Panc1 (cell line): ENCODE measurements at regions of chr4 and their contacts with region 1.

Region 1: GRCh38 chr4:176340871-176341685 is 21.3 kb downstream of the SPCS3 start:
- DNase-seq: no peak
- ATAC-seq: no peak
- H3K4me3 ChIP-seq: no peak overlapping the region
- H3K27ac ChIP-seq: no peak overlapping the region
- H3K4me1 ChIP-seq: no peaks in the 10 kb centered on the region
- H3K27me3 ChIP-seq: no peaks in the 10 kb centered on the region
- CTCF ChIP-seq: peak; percentile 61

Region 2: DNA sequence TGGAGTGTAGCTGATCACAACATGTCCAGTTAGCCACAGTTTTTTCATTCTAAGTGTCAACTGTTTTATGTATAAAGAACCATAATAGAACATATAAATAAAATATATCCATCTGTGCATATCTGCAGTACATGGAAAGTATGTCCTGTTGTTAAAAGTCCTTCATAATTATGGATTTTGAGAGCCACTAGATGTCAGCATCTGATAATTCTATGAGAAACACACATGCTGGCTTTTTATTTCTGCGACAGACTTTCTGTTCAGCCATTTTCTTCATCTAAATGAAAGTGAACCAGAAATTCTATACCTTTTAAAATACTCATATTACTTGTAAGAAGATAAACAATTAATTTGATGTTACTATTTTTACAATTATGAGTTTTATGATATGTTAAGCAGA is 780.5 kb before region 1 on chr4:
- CTCF ChIA-PET with region 1: no interaction called
- POLR2A ChIA-PET with region 1: no interaction called
- in situ Hi-C with region 1: no loop called
- intact Hi-C with region 1: loop called (anchors 10 kb)
- DNase-seq: peak; percentile 5
- ATAC-seq: no peak
- H3K4me3 ChIP-seq: no peak overlapping the region
- H3K27ac ChIP-seq: no peak overlapping the region
- H3K4me1 ChIP-seq: no peaks in the 10 kb centered on the region
- H3K27me3 ChIP-seq: no peaks in the 10 kb centered on the region
- CTCF ChIP-seq: peak; percentile 28; the same call in 1 of the 2 replicates

Region 3: GRCh38 chr4:175947117-175947722 is 393.9 kb before region 1 on chr4:
- CTCF ChIA-PET with region 1: no interaction called
- POLR2A ChIA-PET with region 1: no interaction called
- in situ Hi-C with region 1: no loop called
- intact Hi-C with region 1: loop called (anchors 2 kb)
- DNase-seq: no peak
- ATAC-seq: no peak
- H3K4me3 ChIP-seq: no peak overlapping the region
- H3K27ac ChIP-seq: no peak overlapping the region
- H3K4me1 ChIP-seq: no peaks in the 10 kb centered on the region
- H3K27me3 ChIP-seq: no peaks in the 10 kb centered on the region
- CTCF ChIP-seq: peak; percentile 39; the same call in 1 of the 2 replicates

Region 4: DNA sequence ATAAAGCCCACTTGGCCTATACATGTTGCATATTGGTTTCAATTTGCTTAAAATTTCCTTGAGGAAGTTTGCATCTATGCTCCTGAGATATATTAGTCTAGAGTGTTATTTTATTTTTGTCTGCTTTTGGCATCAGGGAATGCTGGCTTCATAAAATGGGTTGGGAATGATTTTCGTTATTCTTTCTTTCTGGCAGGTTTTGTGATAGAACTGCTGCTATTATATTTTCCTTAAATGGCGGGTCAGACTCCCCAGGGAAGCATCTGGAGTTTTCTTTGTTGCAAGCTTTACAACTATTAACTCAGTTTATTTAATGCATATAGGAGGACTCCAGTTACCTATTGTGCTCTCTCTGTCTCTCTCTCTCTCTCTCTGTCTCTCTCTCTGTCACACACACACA is 357.4 kb before region 1 on chr4:
- CTCF ChIA-PET with region 1: no interaction called
- POLR2A ChIA-PET with region 1: no interaction called
- in situ Hi-C with region 1: no loop called
- intact Hi-C with region 1: no loop called
- DNase-seq: no peak
- ATAC-seq: no peak
- H3K4me3 ChIP-seq: no peak overlapping the region
- H3K27ac ChIP-seq: no peak overlapping the region
- H3K4me1 ChIP-seq: no peaks in the 10 kb centered on the region
- H3K27me3 ChIP-seq: no peaks in the 10 kb centered on the region
- CTCF ChIP-seq: no peak

Region 5: DNA sequence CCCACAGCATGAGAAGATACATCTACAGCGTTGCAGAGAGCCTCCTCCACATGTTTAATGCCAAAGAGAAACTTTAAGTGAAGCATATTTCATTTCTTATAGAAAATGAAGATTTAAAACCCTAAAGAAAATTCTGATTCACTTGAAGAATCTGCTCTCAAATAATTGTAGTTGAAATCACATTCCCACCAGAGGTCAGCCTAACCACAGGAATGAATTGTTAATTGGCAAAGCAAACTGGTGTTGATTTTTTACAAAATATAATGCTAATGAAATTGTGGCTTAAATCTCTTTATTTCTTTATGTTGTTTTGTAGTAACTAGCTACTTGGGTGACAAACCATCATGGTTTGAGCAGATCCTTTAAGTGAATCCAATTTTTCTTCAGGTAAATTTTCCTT is 306.6 kb before region 1 on chr4:
- CTCF ChIA-PET with region 1: interaction called, 3 read pairs
- POLR2A ChIA-PET with region 1: no interaction called
- in situ Hi-C with region 1: no loop called
- intact Hi-C with region 1: loop called (anchors 2 kb)
- DNase-seq: peak; percentile 28
- ATAC-seq: no peak
- H3K4me3 ChIP-seq: no peak overlapping the region
- H3K27ac ChIP-seq: no peak overlapping the region
- H3K4me1 ChIP-seq: no peaks in the 10 kb centered on the region
- H3K27me3 ChIP-seq: no peaks in the 10 kb centered on the region
- CTCF ChIP-seq: peak; percentile 23; the same call in 1 of the 2 replicates

Region 6: DNA sequence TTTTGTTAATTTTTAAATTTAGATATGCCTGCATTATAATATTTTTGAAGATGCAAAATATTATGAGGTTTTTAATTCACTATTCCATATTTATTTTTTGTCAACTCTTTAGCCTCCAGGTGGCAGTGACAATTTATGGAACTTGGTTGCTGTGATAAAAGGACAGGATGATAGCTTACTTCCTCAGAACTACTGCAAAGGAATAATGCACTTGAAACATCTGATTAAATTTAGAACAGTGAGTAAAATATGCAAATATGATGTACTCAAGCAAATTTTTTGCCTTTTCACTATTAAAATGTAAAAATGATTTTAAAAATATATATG is 190.8 kb before region 1 on chr4:
- CTCF ChIA-PET with region 1: no interaction called
- POLR2A ChIA-PET with region 1: no interaction called
- in situ Hi-C with region 1: no loop called
- intact Hi-C with region 1: loop called (anchors 2 kb)
- DNase-seq: no peak
- ATAC-seq: no peak
- H3K4me3 ChIP-seq: no peak overlapping the region
- H3K27ac ChIP-seq: no peak overlapping the region
- H3K4me1 ChIP-seq: no peaks in the 10 kb centered on the region
- H3K27me3 ChIP-seq: no peaks in the 10 kb centered on the region
- CTCF ChIP-seq: peak; percentile 28; the same call in 1 of the 2 replicates